H1 (cell line): ENCODE measurements at regions of chr3 and their contacts with region 1.

Region 1: DNA sequence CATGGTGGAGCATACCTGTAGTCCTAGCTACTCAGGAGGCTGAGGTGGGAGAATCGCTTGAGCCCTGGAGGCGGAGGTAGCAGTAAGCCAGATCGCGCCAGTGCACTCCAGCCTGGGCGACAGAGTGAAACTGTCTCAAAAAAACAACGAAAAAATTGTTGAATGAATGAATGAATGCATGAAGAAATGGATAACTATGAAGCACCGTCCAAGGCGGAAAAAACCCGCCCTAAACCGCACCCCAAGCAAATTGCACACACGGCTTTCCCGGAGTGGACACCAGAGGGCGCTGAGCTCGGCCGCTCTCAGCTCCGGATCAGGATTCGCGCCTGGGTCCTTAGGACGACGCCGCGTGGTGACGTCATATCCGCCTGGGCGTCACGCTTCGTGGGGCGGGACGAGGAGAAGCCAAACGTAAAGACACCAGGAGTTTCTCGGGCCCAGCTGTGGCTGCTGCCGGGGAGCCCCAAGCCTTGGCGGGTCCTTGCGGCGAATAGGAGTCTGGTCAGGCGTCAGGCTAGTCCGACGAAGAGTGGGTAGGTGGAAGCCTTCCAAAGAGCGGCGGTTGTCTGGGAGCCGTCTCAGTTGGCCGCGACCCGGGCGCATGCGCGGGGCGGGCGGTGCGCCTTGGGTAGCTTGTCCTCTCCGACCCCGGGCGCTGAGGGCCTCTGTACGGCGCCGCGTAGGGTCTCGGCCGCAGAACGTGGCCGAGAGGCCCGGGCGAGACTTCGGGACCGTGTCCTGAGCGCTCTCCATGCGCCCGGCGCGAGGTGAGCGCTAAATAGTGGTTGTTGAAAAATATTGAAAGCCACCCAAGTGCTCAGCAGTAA is at the starts of genes HTD2 and RPP14:
- DNase-seq: peak; percentile 90 to 99
- H3K4me3 ChIP-seq: peak within 1 kb of the TSS; percentile 82 to 95 (median 93)
- H3K27ac ChIP-seq: peak within 1 kb of the TSS; percentile 97
- H3K4me1 ChIP-seq: no peaks in the 10 kb centered on the region
- H3K27me3 ChIP-seq: no peaks in the 10 kb centered on the region; a peak in 1 of 7 replicates
- CTCF ChIP-seq: peak; percentile 86 to 98 (median 92)
- EP300 ChIP-seq: peak in 1 of 2 experiments; percentile 63; a peak in 1 of 3 replicates
- POLR2A ChIP-seq: peak; percentile 75 to 96
- RAD21 ChIP-seq: peak; percentile 28 to 47; a peak in 3 of 4 replicates
- total RNA-seq, gene HTD2: 10.3 and 10.8 TPM in 2 replicates
- total RNA-seq, gene RPP14: 19.8 and 23.4 TPM in 2 replicates

Region 2: GRCh38 chr3:58158442-58159153 is 147.5 kb before region 1 on chr3:
- CTCF ChIA-PET with region 1: no interaction called
- POLR2A ChIA-PET with region 1: no interaction called
- DNase-seq: no peak
- H3K4me3 ChIP-seq: no peak overlapping the region
- H3K27ac ChIP-seq: 0 out of 2 replicates have a peak overlapping the region, but pooled peaks have one; percentile 27
- H3K4me1 ChIP-seq: no peaks in the 10 kb centered on the region
- H3K27me3 ChIP-seq: no peaks in the 10 kb centered on the region
- CTCF ChIP-seq: no peak
- EP300 ChIP-seq: no peak
- POLR2A ChIP-seq: no peak
- RAD21 ChIP-seq: no peak

Region 3: GRCh38 chr3:58281069-58281468 is 25.0 kb before region 1 on chr3:
- CTCF ChIA-PET with region 1: interaction called, 4 read pairs
- POLR2A ChIA-PET with region 1: interaction called, 11 read pairs
- DNase-seq: no peak
- H3K4me3 ChIP-seq: no peak overlapping the region
- H3K27ac ChIP-seq: no peak overlapping the region
- H3K4me1 ChIP-seq: no peaks in the 10 kb centered on the region; a peak in 1 of 7 replicates
- H3K27me3 ChIP-seq: no peaks in the 10 kb centered on the region
- CTCF ChIP-seq: no peak
- EP300 ChIP-seq: no peak
- POLR2A ChIP-seq: no peak
- RAD21 ChIP-seq: no peak

Region 4: DNA sequence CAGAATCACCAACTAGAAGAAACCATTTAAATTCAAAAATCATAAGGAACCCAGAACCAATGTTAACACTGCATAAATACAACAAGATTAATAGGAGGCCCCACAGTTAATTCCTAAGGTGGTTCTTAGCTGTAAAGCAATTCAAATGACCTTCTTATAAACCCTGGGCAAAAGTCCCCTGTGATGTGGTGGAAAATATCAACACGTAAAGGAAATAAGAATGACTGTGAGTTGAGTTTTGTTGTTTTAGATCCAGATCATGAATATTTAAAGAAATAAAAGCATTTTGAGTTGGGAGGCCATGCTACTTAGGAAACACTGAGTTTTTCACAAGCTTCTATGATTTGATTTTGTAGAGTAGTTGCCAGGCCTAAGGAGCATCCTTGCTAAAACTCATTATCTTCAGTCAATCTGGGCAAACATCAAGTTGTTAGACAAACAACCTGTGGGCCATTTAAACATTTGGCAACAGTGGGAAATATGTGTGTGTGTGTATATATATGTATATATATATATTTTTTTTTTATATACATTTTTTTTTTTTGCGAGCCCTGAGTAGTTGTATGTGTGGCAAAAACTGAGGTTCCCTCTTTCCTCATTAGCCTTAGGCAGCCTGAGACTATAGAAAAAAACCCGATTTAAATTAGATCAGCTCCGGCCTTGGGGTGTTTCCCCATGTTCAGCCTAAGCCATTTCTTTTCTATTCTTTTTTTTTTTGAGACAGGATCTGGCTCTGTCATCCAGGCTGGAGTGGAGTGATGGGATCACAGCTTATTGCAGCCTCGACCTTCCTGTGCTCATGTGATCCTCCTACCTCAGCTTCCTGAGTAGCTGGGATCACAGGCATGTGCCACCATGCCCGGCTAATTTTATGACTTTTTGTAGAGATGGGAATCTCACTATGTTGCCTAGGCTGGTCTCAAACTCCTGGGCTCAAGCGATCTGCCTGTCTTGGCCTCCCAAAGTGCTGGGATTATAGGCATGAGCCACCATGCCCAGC is 18.6 kb after region 1 on chr3:
- CTCF ChIA-PET with region 1: interaction called, 104 read pairs
- POLR2A ChIA-PET with region 1: interaction called, 64 read pairs
- DNase-seq: no peak
- H3K4me3 ChIP-seq: no peak overlapping the region
- H3K27ac ChIP-seq: no peak overlapping the region
- H3K4me1 ChIP-seq: peaks cover 0 to 9% (median 9%) of the 10 kb centered on the region in 4 experiments; a peak in 5 of 7 replicates
- H3K27me3 ChIP-seq: no peaks in the 10 kb centered on the region
- CTCF ChIP-seq: no peak
- EP300 ChIP-seq: no peak
- POLR2A ChIP-seq: no peak
- RAD21 ChIP-seq: no peak

Region 5: DNA sequence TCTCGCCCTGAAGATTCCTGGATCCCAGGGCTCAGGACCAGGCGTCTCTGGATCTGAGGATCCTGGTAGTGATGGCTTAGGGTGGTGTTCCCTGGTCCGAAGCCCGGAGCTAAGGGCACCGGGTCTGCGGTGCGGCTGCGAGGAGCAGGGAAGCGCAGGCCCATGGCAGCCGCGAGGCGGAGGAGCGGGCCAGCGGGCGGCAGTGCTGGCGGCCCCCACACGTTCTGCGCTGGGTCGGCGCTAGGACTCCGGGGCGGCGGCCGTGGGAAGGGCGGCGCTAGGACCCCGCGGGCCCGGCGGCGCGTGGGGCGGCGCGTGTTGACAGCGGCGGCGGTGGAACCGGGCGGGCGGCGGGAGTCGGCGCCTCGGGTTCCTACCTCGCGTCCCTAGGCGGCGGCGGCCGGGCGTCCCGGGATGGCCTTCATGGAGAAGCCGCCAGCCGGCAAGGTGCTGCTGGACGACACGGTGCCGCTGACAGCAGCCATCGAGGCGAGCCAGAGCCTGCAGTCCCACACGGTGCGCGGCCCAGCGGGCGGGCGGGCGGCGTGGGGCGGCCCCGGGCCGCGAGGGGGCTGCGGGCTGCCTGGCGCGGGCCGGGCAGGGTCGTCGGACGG is 26.6 kb after region 1 on chr3 and contains the start of gene PXK:
- CTCF ChIA-PET with region 1: interaction called, 15 read pairs
- POLR2A ChIA-PET with region 1: no interaction called
- DNase-seq: peak in 1 of 2 experiments; percentile 84
- H3K4me3 ChIP-seq: peak within 1 kb of the TSS; percentile 49 to 65 (median 58)
- H3K27ac ChIP-seq: no peak within 1 kb of the TSS
- H3K4me1 ChIP-seq: 0 out of 7 replicates have a peak, but pooled peaks cover 0 to 4% (median 0%) of the 10 kb centered on the region in 4 experiments
- H3K27me3 ChIP-seq: peaks cover 0 to 16% (median 8%) of the 10 kb centered on the region in 4 experiments; a peak in 5 of 7 replicates
- CTCF ChIP-seq: peak in 1 of 3 experiments; percentile 29; a peak in 2 of 4 replicates
- EP300 ChIP-seq: peak in 1 of 2 experiments; percentile 57; a peak in 1 of 3 replicates
- POLR2A ChIP-seq: no peak
- RAD21 ChIP-seq: peak in 1 of 2 experiments; percentile 42; a peak in 2 of 4 replicates
- total RNA-seq, gene PXK: 6.2 and 7.1 TPM in 2 replicates

Region 6: DNA sequence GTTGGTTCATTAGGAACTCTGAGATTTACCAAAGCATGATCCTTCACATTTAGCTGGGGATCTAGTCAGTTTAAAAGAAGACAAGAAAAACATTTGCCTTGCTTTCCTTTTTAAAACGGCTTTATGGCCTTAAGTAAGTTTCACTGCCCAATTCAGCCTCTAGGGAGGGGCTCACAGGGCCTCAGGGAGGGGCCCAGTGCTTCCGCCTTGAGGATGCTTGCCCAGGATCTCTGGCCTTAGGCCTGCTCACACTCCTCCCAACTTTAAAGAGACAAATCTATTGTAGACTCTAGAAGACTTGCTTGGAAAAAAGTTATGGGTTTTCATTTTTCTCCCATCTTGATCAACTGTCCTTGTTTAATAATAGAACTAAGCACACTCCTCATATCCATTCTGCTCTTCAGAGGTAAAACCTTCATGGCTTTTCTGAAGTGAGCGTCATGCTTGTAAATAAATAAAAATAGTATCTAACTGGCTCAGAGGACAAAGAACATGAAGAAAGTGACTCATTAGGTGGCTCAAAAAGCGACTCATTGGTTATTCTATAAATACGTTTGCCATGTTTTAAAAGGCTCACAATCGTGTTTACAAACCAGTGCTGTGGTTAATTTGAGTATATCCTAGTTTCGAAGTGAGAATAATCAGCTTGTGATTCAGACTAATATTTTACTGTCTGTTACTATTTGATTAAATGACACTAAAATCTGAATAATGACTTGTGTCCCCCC is 113.8 kb after region 1 on chr3:
- CTCF ChIA-PET with region 1: interaction called, 41 read pairs
- POLR2A ChIA-PET with region 1: interaction called, 14 read pairs
- DNase-seq: no peak
- H3K4me3 ChIP-seq: no peak overlapping the region
- H3K27ac ChIP-seq: no peak overlapping the region
- H3K4me1 ChIP-seq: peaks cover 0 to 4% (median 1%) of the 10 kb centered on the region in 4 experiments; a peak in 3 of 7 replicates
- H3K27me3 ChIP-seq: no peaks in the 10 kb centered on the region
- CTCF ChIP-seq: no peak
- EP300 ChIP-seq: no peak
- POLR2A ChIP-seq: no peak
- RAD21 ChIP-seq: no peak